Mammary epithelial cell (primary cell): ENCODE measurements at regions of chr17 and their contacts with region 1.

Region 1: GRCh38 chr17:32936894-32937500 is 9.0 kb downstream of the TMEM98 start:
- DNase-seq: peak; percentile 59
- H3K4me3 ChIP-seq: no peak overlapping the region
- H3K27ac ChIP-seq: peak overlapping the region; percentile 43
- H3K4me1 ChIP-seq: peaks cover 17% of the 10 kb centered on the region
- H3K27me3 ChIP-seq: no peaks in the 10 kb centered on the region
- CTCF ChIP-seq: peak; percentile 77 to 81

Region 2: GRCh38 chr17:32783602-32784001 is 153.4 kb before region 1 on chr17:
- CTCF ChIA-PET with region 1: no interaction called
- dilution Hi-C with region 1: no loop called
- in situ Hi-C with region 1: no loop called
- intact Hi-C with region 1: loop called (anchors 1 kb)
- DNase-seq: peak; percentile 43
- H3K4me3 ChIP-seq: no peak overlapping the region
- H3K27ac ChIP-seq: no peak overlapping the region
- H3K4me1 ChIP-seq: no peaks in the 10 kb centered on the region
- H3K27me3 ChIP-seq: no peaks in the 10 kb centered on the region
- CTCF ChIP-seq: peak; percentile 56 to 63

Region 3: GRCh38 chr17:32926183-32926582 is 10.8 kb before region 1 on chr17:
- CTCF ChIA-PET with region 1: no interaction called
- dilution Hi-C with region 1: no loop called
- in situ Hi-C with region 1: no loop called
- intact Hi-C with region 1: no loop called
- DNase-seq: no peak
- H3K4me3 ChIP-seq: no peak overlapping the region
- H3K27ac ChIP-seq: no peak overlapping the region
- H3K4me1 ChIP-seq: peaks cover 11% of the 10 kb centered on the region
- H3K27me3 ChIP-seq: no peaks in the 10 kb centered on the region
- CTCF ChIP-seq: no peak

Region 4: DNA sequence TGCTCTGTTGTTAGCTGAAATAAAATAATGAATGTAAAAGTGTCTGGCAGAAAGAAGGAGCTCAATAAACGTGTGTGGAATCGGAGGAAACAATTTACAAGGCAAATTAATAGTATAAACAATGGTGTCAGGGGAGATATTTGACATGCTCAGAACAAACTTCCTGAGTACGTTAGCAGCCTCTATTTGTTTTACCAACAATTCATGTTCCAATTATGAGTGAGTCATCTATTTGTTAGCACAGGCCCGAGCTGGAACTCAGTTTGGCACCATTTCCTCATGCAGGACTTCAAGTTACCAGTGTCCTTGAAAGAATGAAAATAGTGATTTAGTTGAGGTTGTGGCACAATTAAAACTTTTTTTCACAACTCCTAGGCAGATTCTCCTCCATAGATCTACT is 347.0 kb after region 1 on chr17:
- CTCF ChIA-PET with region 1: no interaction called
- dilution Hi-C with region 1: no loop called
- in situ Hi-C with region 1: no loop called
- intact Hi-C with region 1: loop called (anchors 10 kb)
- DNase-seq: peak; percentile 81
- H3K4me3 ChIP-seq: no peak overlapping the region
- H3K27ac ChIP-seq: peak overlapping the region; percentile 68
- H3K4me1 ChIP-seq: peaks cover 29% of the 10 kb centered on the region
- H3K27me3 ChIP-seq: no peaks in the 10 kb centered on the region
- CTCF ChIP-seq: no peak

Region 5: DNA sequence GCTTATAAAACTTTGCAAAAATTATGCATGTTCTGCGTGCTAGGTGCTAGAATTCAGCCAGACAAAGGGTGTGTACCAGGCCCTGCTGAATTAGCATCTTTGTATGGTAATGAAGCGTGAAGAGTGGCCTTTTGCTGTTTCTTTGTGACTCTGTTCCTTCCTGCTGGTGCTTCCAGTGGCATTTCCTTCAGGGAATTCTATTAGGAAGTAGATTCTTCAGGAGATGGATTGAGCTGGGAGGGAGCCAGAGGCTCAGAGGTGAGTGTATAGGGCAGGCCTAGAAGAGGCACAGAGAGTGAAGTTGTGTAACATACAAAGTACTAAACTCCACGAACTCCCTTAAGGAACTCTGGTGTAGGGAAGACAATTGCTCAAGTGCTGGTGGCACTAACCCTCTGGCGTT is 430.0 kb after region 1 on chr17:
- CTCF ChIA-PET with region 1: no interaction called
- dilution Hi-C with region 1: no loop called
- in situ Hi-C with region 1: no loop called
- intact Hi-C with region 1: no loop called
- DNase-seq: no peak
- H3K4me3 ChIP-seq: no peak overlapping the region
- H3K27ac ChIP-seq: no peak overlapping the region
- H3K4me1 ChIP-seq: no peaks in the 10 kb centered on the region
- H3K27me3 ChIP-seq: no peaks in the 10 kb centered on the region
- CTCF ChIP-seq: no peak